ENCODE measurements at regions of chr5 and their contacts with region 1.

Region 1: GRCh38 chr5:114101153-114101552 is 260.7 kb upstream of the KCNN2 start:
- DNase-seq: peak; percentile 26
- ATAC-seq: peak; percentile 80
- H3K4me3 ChIP-seq: no peak overlapping the region
- H3K27ac ChIP-seq: no peak overlapping the region
- H3K4me1 ChIP-seq: no peaks in the 10 kb centered on the region
- H3K27me3 ChIP-seq: 0 out of 2 replicates have a peak, but pooled peaks cover 8% of the 10 kb centered on the region
- CTCF ChIP-seq: peak; percentile 44 to 50 (median 48); a peak in 4 of 6 replicates
- POLR2A ChIP-seq: no peak
- RAD21 ChIP-seq: peak; percentile 62

Region 2: DNA sequence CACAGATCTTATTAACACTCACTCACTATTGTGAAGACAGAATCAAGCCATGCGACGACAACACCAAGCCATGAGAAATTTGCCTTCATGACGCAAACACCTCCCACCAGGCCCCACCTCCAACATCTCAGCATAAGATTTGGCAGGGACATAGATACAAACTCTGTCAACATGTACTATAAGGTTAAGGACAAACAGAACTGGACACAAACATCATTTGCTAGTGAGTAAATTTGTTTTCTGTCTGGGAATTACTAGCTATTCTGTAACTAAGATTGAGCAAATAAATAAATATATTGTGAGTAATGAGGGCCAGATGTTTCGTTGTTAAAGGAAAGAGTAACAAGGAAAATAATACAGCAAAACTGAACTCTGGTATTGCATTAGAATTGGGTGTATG is 245.0 kb after region 1 on chr5:
- CTCF ChIA-PET with region 1: no interaction called
- POLR2A ChIA-PET with region 1: no interaction called
- RAD21 ChIA-PET with region 1: no interaction called
- intact Hi-C with region 1: loop called (anchors 10 kb)
- DNase-seq: no peak
- ATAC-seq: no peak
- H3K4me3 ChIP-seq: no peak overlapping the region
- H3K27ac ChIP-seq: no peak overlapping the region
- H3K4me1 ChIP-seq: no peaks in the 10 kb centered on the region
- H3K27me3 ChIP-seq: no peaks in the 10 kb centered on the region
- CTCF ChIP-seq: no peak
- POLR2A ChIP-seq: no peak
- RAD21 ChIP-seq: no peak

Measured in HCT116 (cell line).